AG04450 (cell line): ENCODE measurements at regions of chr13 and their contacts with region 1.

Region 1: DNA sequence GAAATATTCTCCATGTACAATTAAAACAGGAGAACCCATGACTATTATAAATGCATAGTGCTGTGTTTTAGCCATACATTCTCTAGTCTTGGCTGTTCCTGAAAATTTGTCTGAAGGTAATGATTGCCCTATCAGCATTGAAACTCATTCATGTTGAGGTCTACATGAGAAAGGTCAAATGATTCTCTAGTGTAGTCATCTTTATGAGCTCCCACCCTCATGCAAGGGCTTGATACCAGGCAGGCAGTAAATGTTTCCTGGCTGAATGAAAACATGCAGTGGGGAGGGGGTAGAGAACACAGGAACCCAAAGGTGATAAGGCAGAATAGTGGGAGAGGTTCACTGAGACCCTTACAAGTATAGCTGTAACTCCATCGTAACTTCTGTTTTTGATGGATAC is 424.3 kb downstream of the COG6 start:
- DNase-seq: no peak
- H3K4me3 ChIP-seq: no peak overlapping the region
- H3K27ac ChIP-seq: no peak overlapping the region
- H3K27me3 ChIP-seq: no peaks in the 10 kb centered on the region
- CTCF ChIP-seq: no peak

Region 2: GRCh38 chr13:40069173-40070044 is 10.3 kb before region 1 on chr13:
- CTCF ChIA-PET with region 1: interaction called, 15 read pairs
- POLR2A ChIA-PET with region 1: no interaction called
- DNase-seq: peak; percentile 23
- H3K4me3 ChIP-seq: no peak overlapping the region
- H3K27ac ChIP-seq: no peak overlapping the region
- H3K27me3 ChIP-seq: no peaks in the 10 kb centered on the region
- CTCF ChIP-seq: peak; percentile 84

Region 3: DNA sequence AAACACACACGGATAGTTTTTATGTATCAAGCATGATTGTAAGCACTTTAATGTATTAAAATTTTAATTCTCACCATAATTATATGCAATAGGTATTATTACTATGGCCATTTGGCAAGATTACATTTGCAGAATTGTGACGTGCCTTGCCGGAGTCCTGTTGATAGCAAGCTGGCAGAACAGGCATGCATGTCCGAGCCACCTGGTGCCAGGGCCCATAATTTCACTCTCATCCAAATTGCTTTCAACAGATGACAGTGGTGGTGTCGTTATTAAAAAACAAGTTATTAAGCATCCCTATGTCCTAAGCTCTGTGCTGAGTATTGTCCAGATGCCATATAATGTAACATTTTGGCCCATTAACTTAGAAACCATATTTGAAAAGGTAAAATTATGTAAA is 212.4 kb after region 1 on chr13:
- CTCF ChIA-PET with region 1: no interaction called
- POLR2A ChIA-PET with region 1: no interaction called
- DNase-seq: no peak
- H3K4me3 ChIP-seq: no peak overlapping the region
- H3K27ac ChIP-seq: no peak overlapping the region
- H3K27me3 ChIP-seq: no peaks in the 10 kb centered on the region
- CTCF ChIP-seq: no peak

Region 4: DNA sequence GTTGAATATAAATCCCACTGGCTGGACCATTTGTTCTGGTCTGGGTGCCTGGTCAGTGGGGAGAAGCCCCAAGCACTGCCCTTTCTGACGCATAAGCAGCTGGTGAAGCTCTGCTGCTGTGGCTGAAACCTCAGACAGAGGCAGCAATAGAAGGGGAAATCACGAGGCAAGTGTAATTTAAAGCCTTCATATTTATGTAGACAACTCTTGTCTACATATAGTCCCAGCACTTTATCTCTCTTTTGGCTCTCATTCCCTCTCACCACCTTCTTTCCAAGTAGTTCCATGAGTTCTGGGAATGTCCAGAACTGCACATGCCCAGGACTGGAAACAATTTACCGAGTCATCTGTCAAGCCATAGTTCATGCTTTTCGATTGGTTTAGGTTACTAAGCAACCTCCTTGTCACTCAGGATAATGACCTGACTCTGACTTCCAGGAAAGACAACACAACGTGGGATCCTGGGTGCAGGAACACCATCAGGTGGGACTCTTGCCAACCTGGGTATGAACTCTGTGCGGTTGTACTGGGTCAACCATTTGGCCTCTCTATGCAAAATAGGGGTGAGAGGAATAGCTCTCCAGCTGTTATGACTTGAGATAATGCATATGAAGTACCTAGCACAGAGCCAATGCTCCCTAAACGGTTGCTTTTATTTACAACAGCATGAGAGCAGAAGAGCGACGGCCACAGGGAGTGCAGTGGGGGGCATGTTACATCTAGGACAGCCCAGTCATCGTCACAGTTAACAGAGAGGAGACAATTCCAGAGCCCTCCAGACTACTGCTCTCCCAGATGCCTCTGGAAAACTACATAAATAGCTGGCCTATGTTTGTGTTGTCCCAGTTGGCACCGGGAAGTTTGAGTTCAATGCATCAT is 264.8 kb after region 1 on chr13:
- CTCF ChIA-PET with region 1: no interaction called
- POLR2A ChIA-PET with region 1: no interaction called
- DNase-seq: no peak
- H3K4me3 ChIP-seq: no peak overlapping the region
- H3K27ac ChIP-seq: no peak overlapping the region
- H3K27me3 ChIP-seq: peaks cover 2% of the 10 kb centered on the region
- CTCF ChIP-seq: no peak